CD8-positive, alpha-beta T cell (primary cell): ENCODE measurements at regions of chr6 and their contacts with region 1.

Region 1: DNA sequence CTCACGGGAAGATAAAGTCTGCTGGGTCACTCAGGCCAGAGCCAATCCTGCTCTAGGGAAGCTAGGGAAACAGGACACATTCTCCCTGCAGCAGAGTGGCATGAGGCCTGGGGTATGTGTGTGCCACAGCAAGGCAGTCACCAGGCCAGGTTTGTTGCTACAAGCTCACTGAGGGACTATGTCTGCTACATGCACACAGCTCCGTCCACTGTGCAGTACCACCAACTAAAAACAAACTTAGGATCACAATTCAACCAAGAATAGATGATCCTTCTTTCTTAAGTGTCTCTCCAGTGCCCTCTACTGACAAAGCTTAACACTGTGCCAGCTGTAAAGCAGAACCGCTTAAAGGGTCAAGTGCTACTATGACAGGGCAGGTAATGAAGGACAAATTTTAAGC is 192.5 kb downstream of the PTPRK start:
- DNase-seq: peak in 4 of 9 experiments; percentile 7 to 63 (median 35)
- ATAC-seq: peak; percentile 44
- H3K4me3 ChIP-seq: no peak overlapping the region
- H3K4me3 Mint-ChIP-seq: no peak overlapping the region
- H3K27ac ChIP-seq: no peak overlapping the region
- H3K27ac Mint-ChIP-seq: no peak overlapping the region
- H3K4me1 ChIP-seq: no peaks in the 10 kb centered on the region
- H3K4me1 Mint-ChIP-seq: no peaks in the 10 kb centered on the region
- H3K27me3 ChIP-seq: no peaks in the 10 kb centered on the region
- H3K27me3 Mint-ChIP-seq: no peaks in the 10 kb centered on the region
- CTCF ChIP-seq: no peak

Region 2: GRCh38 chr6:127606131-127606562 is 721.7 kb before region 1 on chr6:
- CTCF ChIA-PET with region 1: no interaction called
- POLR2A ChIA-PET with region 1: no interaction called
- intact Hi-C with region 1: loop called in 1 of 2 experiments (anchors 10 kb)
- DNase-seq: peak in 3 of 9 experiments; percentile 19 to 45 (median 33)
- ATAC-seq: no peak
- H3K4me3 ChIP-seq: no peak overlapping the region
- H3K4me3 Mint-ChIP-seq: no peak overlapping the region
- H3K27ac ChIP-seq: no peak overlapping the region
- H3K27ac Mint-ChIP-seq: no peak overlapping the region
- H3K4me1 ChIP-seq: no peaks in the 10 kb centered on the region
- H3K4me1 Mint-ChIP-seq: no peaks in the 10 kb centered on the region
- H3K27me3 ChIP-seq: no peaks in the 10 kb centered on the region
- H3K27me3 Mint-ChIP-seq: peaks cover 2% of the 10 kb centered on the region
- CTCF ChIP-seq: peak; percentile 15